ENCODE measurements at regions of chr10 and their contacts with region 1.

Region 1: GRCh38 chr10:102583435-102584417 is 60.6 kb upstream of the TRIM8 start:
- DNase-seq: peak; percentile 51
- ATAC-seq: peak; percentile 100
- H3K4me3 ChIP-seq: no peak overlapping the region
- H3K27ac ChIP-seq: no peak overlapping the region
- H3K4me1 ChIP-seq: no peaks in the 10 kb centered on the region
- H3K27me3 ChIP-seq: no peaks in the 10 kb centered on the region
- CTCF ChIP-seq: peak; percentile 86 to 96 (median 92)
- EP300 ChIP-seq: no peak
- POLR2A ChIP-seq: no peak
- RAD21 ChIP-seq: peak; percentile 92

Region 2: GRCh38 chr10:102384053-102384452 is 199.7 kb before region 1 on chr10:
- CTCF ChIA-PET with region 1: interaction called, 10 read pairs
- POLR2A ChIA-PET with region 1: no interaction called
- RAD21 ChIA-PET with region 1: interaction called, 4 read pairs
- SMC1A ChIA-PET with region 1: interaction called, 3 read pairs
- in situ Hi-C with region 1: no loop called
- intact Hi-C with region 1: no loop called
- DNase-seq: no peak
- ATAC-seq: peak; percentile 59
- H3K4me3 ChIP-seq: no peak overlapping the region
- H3K27ac ChIP-seq: no peak overlapping the region
- H3K4me1 ChIP-seq: peaks cover 13% of the 10 kb centered on the region
- H3K27me3 ChIP-seq: no peaks in the 10 kb centered on the region
- CTCF ChIP-seq: peak in 1 of 3 experiments; percentile 26; a peak in 3 of 6 replicates
- EP300 ChIP-seq: no peak
- POLR2A ChIP-seq: no peak
- RAD21 ChIP-seq: no peak

Region 3: GRCh38 chr10:102461187-102462054 is 122.3 kb before region 1 on chr10:
- CTCF ChIA-PET with region 1: interaction called, 10 read pairs
- POLR2A ChIA-PET with region 1: no interaction called
- RAD21 ChIA-PET with region 1: interaction called, 4 read pairs
- SMC1A ChIA-PET with region 1: interaction called, 3 read pairs
- in situ Hi-C with region 1: no loop called
- intact Hi-C with region 1: no loop called
- DNase-seq: peak; percentile 43
- ATAC-seq: peak; percentile 96
- H3K4me3 ChIP-seq: peak overlapping the region; percentile 73
- H3K27ac ChIP-seq: no peak overlapping the region
- H3K4me1 ChIP-seq: peaks cover 16% of the 10 kb centered on the region
- H3K27me3 ChIP-seq: no peaks in the 10 kb centered on the region
- CTCF ChIP-seq: no peak
- EP300 ChIP-seq: no peak
- POLR2A ChIP-seq: peak; percentile 53
- RAD21 ChIP-seq: no peak

Region 4: DNA sequence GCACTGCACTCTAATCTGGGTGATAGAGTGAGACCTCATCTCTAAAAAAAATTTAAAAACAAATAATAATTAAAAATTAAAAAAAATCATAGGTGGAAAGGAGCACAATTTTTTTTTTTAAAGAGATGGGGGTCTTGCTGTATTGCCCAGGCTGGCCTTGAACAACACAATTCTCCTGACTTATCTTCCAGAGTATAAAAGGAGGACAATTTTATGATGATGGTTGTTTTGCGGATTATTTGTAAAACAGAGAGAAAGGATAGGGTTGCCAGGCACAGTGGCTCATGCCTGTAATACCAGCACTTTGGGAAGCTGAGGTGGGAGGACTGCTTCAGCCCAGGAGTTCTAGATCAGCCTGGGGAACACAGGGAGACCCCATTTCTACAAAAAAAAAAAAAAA is 86.2 kb before region 1 on chr10:
- CTCF ChIA-PET with region 1: interaction called, 325 read pairs
- POLR2A ChIA-PET with region 1: interaction called, 24 read pairs
- RAD21 ChIA-PET with region 1: interaction called, 206 read pairs
- SMC1A ChIA-PET with region 1: interaction called, 137 read pairs
- in situ Hi-C with region 1: no loop called
- intact Hi-C with region 1: no loop called
- DNase-seq: no peak
- ATAC-seq: no peak
- H3K4me3 ChIP-seq: no peak overlapping the region
- H3K27ac ChIP-seq: no peak overlapping the region
- H3K4me1 ChIP-seq: no peaks in the 10 kb centered on the region
- H3K27me3 ChIP-seq: no peaks in the 10 kb centered on the region
- CTCF ChIP-seq: no peak
- EP300 ChIP-seq: no peak
- POLR2A ChIP-seq: no peak
- RAD21 ChIP-seq: no peak

Region 5: GRCh38 chr10:102511583-102512274 is 72.0 kb before region 1 on chr10:
- CTCF ChIA-PET with region 1: interaction called, 325 read pairs
- POLR2A ChIA-PET with region 1: interaction called, 7 read pairs
- RAD21 ChIA-PET with region 1: interaction called, 206 read pairs
- SMC1A ChIA-PET with region 1: interaction called, 137 read pairs
- in situ Hi-C with region 1: loop called (anchors 5 kb)
- intact Hi-C with region 1: no loop called
- DNase-seq: peak; percentile 48
- ATAC-seq: peak; percentile 99
- H3K4me3 ChIP-seq: peak overlapping the region; percentile 28; the same call in 1 of the 2 replicates
- H3K27ac ChIP-seq: peak overlapping the region; percentile 51
- H3K4me1 ChIP-seq: peaks cover 13% of the 10 kb centered on the region
- H3K27me3 ChIP-seq: no peaks in the 10 kb centered on the region
- CTCF ChIP-seq: no peak
- EP300 ChIP-seq: no peak
- POLR2A ChIP-seq: no peak
- RAD21 ChIP-seq: no peak

Region 6: GRCh38 chr10:102620591-102621437 is 37.1 kb after region 1 on chr10:
- CTCF ChIA-PET with region 1: no interaction called
- POLR2A ChIA-PET with region 1: no interaction called
- RAD21 ChIA-PET with region 1: no interaction called
- SMC1A ChIA-PET with region 1: no interaction called
- in situ Hi-C with region 1: no loop called
- intact Hi-C with region 1: no loop called
- DNase-seq: no peak
- ATAC-seq: no peak
- H3K4me3 ChIP-seq: no peak overlapping the region
- H3K27ac ChIP-seq: no peak overlapping the region
- H3K4me1 ChIP-seq: 0 out of 2 replicates have a peak, but pooled peaks cover 3% of the 10 kb centered on the region
- H3K27me3 ChIP-seq: no peaks in the 10 kb centered on the region
- CTCF ChIP-seq: no peak
- EP300 ChIP-seq: no peak
- POLR2A ChIP-seq: no peak
- RAD21 ChIP-seq: no peak

Region 7: GRCh38 chr10:102814873-102815661 is 231.3 kb after region 1 on chr10:
- CTCF ChIA-PET with region 1: no interaction called
- POLR2A ChIA-PET with region 1: no interaction called
- RAD21 ChIA-PET with region 1: no interaction called
- SMC1A ChIA-PET with region 1: no interaction called
- in situ Hi-C with region 1: no loop called
- intact Hi-C with region 1: no loop called
- DNase-seq: no peak
- ATAC-seq: no peak
- H3K4me3 ChIP-seq: no peak overlapping the region
- H3K27ac ChIP-seq: no peak overlapping the region
- H3K4me1 ChIP-seq: peaks cover 3% of the 10 kb centered on the region
- H3K27me3 ChIP-seq: no peaks in the 10 kb centered on the region
- CTCF ChIP-seq: no peak
- EP300 ChIP-seq: no peak
- POLR2A ChIP-seq: no peak
- RAD21 ChIP-seq: no peak

Region 8: DNA sequence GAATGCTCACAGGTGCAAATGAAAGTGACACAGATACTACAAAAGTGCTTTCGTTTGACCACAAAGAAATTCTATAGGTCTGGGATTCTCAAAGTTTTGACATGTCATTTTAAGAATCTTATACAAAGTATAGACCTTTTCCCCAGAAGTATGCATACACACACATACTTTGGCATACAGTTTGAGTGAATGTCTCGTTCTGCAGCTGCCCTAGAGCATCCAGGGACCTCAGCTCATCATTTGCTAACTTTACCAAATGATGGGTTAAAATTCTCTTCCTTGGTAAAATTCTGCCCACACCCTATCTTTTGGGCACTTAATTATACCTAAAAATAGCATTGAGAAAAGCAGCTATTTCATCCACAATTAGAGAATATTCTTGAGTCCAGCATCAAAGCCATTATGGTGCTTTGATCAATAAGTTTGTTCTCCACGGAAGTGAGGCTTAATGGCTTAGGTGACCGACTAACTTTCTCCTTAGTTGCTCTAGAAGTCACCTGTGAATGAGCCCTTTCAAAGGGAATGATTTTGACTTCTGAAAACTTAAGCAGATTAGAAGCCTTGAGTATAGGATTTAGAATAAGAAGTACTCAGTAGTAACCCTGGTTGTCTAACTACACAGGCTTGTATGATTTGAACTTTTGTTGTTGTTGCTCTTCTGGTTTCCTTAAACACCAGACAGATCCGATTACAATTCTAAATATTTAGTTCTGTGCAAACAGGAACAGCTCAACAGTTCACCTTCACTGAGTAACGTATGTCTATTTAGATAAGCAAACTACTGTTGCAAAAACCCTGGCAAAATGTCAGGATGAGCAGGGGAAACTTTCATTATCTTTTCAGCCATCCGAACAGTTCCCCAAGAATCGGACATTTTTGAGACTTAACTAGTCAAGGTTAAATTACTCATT is 404.9 kb after region 1 on chr10:
- CTCF ChIA-PET with region 1: no interaction called
- POLR2A ChIA-PET with region 1: no interaction called
- RAD21 ChIA-PET with region 1: no interaction called
- SMC1A ChIA-PET with region 1: no interaction called
- in situ Hi-C with region 1: no loop called
- intact Hi-C with region 1: no loop called
- DNase-seq: no peak
- ATAC-seq: no peak
- H3K4me3 ChIP-seq: no peak overlapping the region
- H3K27ac ChIP-seq: no peak overlapping the region
- H3K4me1 ChIP-seq: no peaks in the 10 kb centered on the region
- H3K27me3 ChIP-seq: no peaks in the 10 kb centered on the region
- CTCF ChIP-seq: no peak
- EP300 ChIP-seq: no peak
- POLR2A ChIP-seq: no peak
- RAD21 ChIP-seq: no peak

Region 9: GRCh38 chr10:103013416-103013815 is 429.7 kb after region 1 on chr10:
- CTCF ChIA-PET with region 1: no interaction called
- POLR2A ChIA-PET with region 1: no interaction called
- RAD21 ChIA-PET with region 1: no interaction called
- SMC1A ChIA-PET with region 1: no interaction called
- in situ Hi-C with region 1: no loop called
- intact Hi-C with region 1: no loop called
- DNase-seq: no peak
- ATAC-seq: no peak
- H3K4me3 ChIP-seq: no peak overlapping the region
- H3K27ac ChIP-seq: no peak overlapping the region
- H3K4me1 ChIP-seq: no peaks in the 10 kb centered on the region
- H3K27me3 ChIP-seq: no peaks in the 10 kb centered on the region
- CTCF ChIP-seq: no peak
- EP300 ChIP-seq: no peak
- POLR2A ChIP-seq: no peak
- RAD21 ChIP-seq: no peak